ENCODE measurements at regions of chr20 and their contacts with region 1.

Region 1: GRCh38 chr20:6466075-6466810 is 301.2 kb upstream of the BMP2 start:
- DNase-seq: peak; percentile 45
- ATAC-seq: peak; percentile 87
- H3K4me3 ChIP-seq: no peak overlapping the region
- H3K27ac ChIP-seq: peak overlapping the region; percentile 63; the same call in 1 of the 2 replicates
- H3K4me1 ChIP-seq: peaks cover 9% of the 10 kb centered on the region
- H3K27me3 ChIP-seq: no peaks in the 10 kb centered on the region
- CTCF ChIP-seq: no peak
- POLR2A ChIP-seq: no peak
- RAD21 ChIP-seq: no peak

Region 2: GRCh38 chr20:6231551-6231950 is 234.7 kb before region 1 on chr20:
- CTCF ChIA-PET with region 1: no interaction called
- POLR2A ChIA-PET with region 1: no interaction called
- dilution Hi-C with region 1: no loop called
- in situ Hi-C with region 1: no loop called
- intact Hi-C with region 1: no loop called
- DNase-seq: peak; percentile 2
- ATAC-seq: no peak
- H3K4me3 ChIP-seq: no peak overlapping the region
- H3K27ac ChIP-seq: no peak overlapping the region
- H3K4me1 ChIP-seq: no peaks in the 10 kb centered on the region
- H3K27me3 ChIP-seq: no peaks in the 10 kb centered on the region
- CTCF ChIP-seq: no peak
- POLR2A ChIP-seq: no peak
- RAD21 ChIP-seq: no peak

Region 3: DNA sequence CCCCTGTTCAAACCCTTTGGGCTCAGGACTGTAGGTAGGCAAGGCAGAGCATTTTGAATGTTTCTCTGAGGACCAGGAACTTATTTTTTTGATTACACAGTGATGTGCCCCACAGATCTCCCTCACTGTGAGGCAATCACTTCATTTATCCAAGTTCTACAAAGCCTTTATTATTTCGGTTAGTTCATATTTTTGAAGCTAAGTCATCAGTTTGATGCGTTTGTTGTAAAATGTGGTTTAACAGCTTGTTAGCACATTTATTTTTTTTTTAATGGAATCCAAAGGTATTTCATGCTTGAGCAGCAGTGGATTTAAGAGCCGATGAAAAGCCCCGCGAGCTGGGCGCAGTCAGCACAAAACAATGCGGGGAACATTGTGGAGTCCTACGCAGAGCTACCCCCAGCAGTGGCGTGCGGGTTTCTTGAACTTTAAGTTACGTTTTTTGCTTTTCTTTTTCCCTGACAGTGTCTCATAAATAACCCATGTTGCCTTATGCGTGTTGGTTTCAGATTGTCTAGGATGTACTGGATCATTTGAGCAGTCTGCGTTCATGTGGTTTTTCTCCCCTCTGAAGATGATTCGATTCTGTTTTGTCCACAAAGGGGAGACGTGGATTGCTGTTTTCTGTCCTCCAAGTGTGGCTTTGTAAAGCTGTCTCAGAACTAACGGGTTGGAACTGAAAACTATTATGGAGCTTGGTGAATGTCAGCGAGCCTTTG is 67.7 kb after region 1 on chr20:
- CTCF ChIA-PET with region 1: no interaction called
- POLR2A ChIA-PET with region 1: no interaction called
- dilution Hi-C with region 1: no loop called
- in situ Hi-C with region 1: no loop called
- intact Hi-C with region 1: loop called (anchors 2 kb)
- DNase-seq: peak; percentile 88
- ATAC-seq: peak; percentile 85
- H3K4me3 ChIP-seq: peak overlapping the region; percentile 51
- H3K27ac ChIP-seq: peak overlapping the region; percentile 90
- H3K4me1 ChIP-seq: peaks cover 7% of the 10 kb centered on the region
- H3K27me3 ChIP-seq: no peaks in the 10 kb centered on the region
- CTCF ChIP-seq: 0 out of 2 replicates have a peak, but pooled peaks have one; percentile 3
- POLR2A ChIP-seq: no peak
- RAD21 ChIP-seq: peak; percentile 13; the same call in 1 of the 2 replicates

Region 4: GRCh38 chr20:7113577-7114466 is 647.6 kb after region 1 on chr20:
- CTCF ChIA-PET with region 1: no interaction called
- POLR2A ChIA-PET with region 1: no interaction called
- dilution Hi-C with region 1: no loop called
- in situ Hi-C with region 1: no loop called
- intact Hi-C with region 1: no loop called
- DNase-seq: peak; percentile 1
- ATAC-seq: no peak
- H3K4me3 ChIP-seq: no peak overlapping the region
- H3K27ac ChIP-seq: no peak overlapping the region
- H3K4me1 ChIP-seq: no peaks in the 10 kb centered on the region
- H3K27me3 ChIP-seq: no peaks in the 10 kb centered on the region
- CTCF ChIP-seq: 0 out of 2 replicates have a peak, but pooled peaks have one; percentile 7
- POLR2A ChIP-seq: no peak
- RAD21 ChIP-seq: no peak

Measured in IMR-90 (cell line).